ENCODE measurements at regions of chr17 and their contacts with region 1.

Region 1: GRCh38 chr17:8708025-8708461 is 36.6 kb downstream of the CCDC42 start:
- DNase-seq: peak; percentile 45
- ATAC-seq: peak; percentile 90 to 94

Region 2: GRCh38 chr17:8630802-8631553 is 77.1 kb before region 1 on chr17:
- intact Hi-C with region 1: loop called in 1 of 2 experiments (anchors 2 kb)
- DNase-seq: peak; percentile 99
- ATAC-seq: peak; percentile 96 to 98

Region 3: DNA sequence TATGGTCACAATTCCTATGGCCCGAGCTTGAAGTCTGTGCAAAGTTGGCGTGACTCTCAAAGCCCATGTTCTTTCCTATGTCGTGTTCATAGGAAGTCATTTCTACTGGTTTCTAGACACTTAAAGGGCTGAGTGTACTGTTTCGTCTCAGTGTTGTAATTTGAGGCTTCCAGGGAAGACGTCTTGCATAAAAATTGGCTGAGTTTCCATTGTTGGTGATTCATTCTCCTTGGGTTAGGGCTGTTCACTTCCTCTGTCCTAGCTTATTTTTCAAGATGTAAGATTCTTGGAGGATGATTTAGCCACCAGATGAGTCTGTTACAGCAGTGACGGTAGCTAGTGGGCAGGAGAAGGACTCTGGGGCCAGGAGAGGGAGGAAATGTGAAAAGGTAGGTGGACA is 214.4 kb after region 1 on chr17:
- intact Hi-C with region 1: no loop called
- DNase-seq: no peak
- ATAC-seq: peak; percentile 59 to 93